Activated CD4-positive, alpha-beta T cell treated with anti-CD3 and anti-CD28 coated beads, Interleukin-2, amount 10 ng/mL, durations not matched to agents 24 days and 14 days (primary cell): ENCODE measurements at regions of chr3 and their contacts with region 1.

Region 1: GRCh38 chr3:134600685-134601463 is 49.9 kb downstream of the KY start:
- DNase-seq: peak; percentile 90
- H3K4me3 Mint-ChIP-seq: no peak overlapping the region
- H3K27ac Mint-ChIP-seq: no peak overlapping the region
- H3K4me1 Mint-ChIP-seq: peaks cover 11% of the 10 kb centered on the region
- H3K27me3 Mint-ChIP-seq: peaks cover 3% of the 10 kb centered on the region

Region 2: GRCh38 chr3:134737516-134737915 is 136.6 kb after region 1 on chr3:
- intact Hi-C with region 1: no loop called
- DNase-seq: no peak
- H3K4me3 Mint-ChIP-seq: no peak overlapping the region
- H3K27ac Mint-ChIP-seq: no peak overlapping the region
- H3K4me1 Mint-ChIP-seq: no peaks in the 10 kb centered on the region
- H3K27me3 Mint-ChIP-seq: peaks cover 17% of the 10 kb centered on the region

Region 3: DNA sequence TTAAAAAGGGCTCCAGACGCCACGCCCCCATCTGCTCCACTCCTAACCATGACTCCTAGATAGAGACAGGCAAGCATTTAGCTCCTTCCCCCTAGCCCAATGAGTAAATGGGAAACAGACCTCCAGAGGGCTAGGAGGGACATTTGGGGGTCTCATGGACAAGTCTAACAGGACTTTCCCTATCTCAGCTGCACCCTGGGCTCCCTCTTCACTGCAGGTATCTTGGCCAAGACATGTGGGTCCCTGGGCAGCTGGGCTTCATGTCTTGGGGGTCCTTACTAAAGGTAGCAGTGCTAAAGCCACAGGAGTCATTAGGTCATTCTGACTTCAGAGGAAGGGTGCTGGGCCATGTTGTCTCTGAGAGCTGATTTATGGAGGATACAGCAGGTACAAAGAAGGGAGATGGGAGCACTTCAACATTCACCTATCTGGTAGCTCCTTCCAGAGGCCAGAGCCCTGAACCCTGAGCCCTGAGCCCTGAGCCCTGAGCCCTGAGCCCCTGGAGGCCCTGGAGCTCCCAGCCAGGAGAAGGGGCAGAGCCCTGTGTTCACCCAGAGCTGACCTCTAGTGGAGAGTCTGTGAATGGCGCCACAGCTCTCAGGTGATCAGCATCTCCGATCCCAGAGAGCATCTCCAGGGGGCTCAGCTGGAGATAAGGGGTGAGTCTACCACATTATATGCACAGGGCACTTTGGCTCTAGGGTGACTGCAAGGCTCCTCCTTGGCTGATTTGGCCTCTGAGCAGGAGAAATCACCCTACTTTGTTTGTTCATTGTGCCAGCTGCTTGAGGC is 154.1 kb after region 1 on chr3:
- intact Hi-C with region 1: loop called (anchors 10 kb)
- DNase-seq: peak; percentile 78
- H3K4me3 Mint-ChIP-seq: no peak overlapping the region
- H3K27ac Mint-ChIP-seq: no peak overlapping the region
- H3K4me1 Mint-ChIP-seq: no peaks in the 10 kb centered on the region
- H3K27me3 Mint-ChIP-seq: no peaks in the 10 kb centered on the region

Region 4: DNA sequence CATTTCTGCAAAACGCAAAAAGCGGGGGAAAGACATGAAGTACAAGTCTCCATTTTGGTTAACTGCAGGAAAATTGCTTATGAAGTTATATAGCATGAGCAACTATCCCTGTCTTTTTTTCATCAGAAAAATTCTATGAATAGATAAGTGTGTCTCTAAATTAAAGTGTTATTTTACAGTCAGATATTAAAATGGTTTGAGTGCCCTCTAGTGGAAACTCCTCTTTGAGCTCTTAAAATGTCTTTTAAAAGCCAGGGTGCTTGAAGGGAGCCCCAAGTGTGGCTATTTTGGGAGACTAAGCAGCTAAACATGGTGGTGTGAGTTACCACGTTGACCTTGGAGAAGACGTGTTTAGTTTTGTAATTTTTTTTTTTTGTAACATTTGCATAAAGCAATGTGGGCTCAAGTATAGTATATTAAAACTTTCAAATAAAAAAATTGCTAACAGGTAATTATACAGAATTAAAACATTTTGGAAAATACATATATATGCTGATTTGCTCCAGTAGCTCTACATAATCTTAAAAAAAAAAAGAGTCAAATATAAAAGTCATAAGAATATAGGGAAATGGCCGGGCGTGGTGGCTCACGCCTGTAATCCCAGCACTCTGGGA is 1441.8 kb after region 1 on chr3:
- intact Hi-C with region 1: loop called (anchors 5 kb)
- DNase-seq: no peak
- H3K4me3 Mint-ChIP-seq: no peak overlapping the region
- H3K27ac Mint-ChIP-seq: no peak overlapping the region
- H3K4me1 Mint-ChIP-seq: no peaks in the 10 kb centered on the region
- H3K27me3 Mint-ChIP-seq: peaks cover 6% of the 10 kb centered on the region